OCI-LY7 (cell line): ENCODE measurements at regions of chr6 and their contacts with region 1.

Region 1: GRCh38 chr6:85593438-85594196 is at the start of gene SNX14:
- DNase-seq: peak; percentile 93
- H3K4me3 ChIP-seq: peak within 1 kb of the TSS; percentile 85
- H3K27ac ChIP-seq: peak within 1 kb of the TSS; percentile 83
- H3K4me1 ChIP-seq: peaks cover 26% of the 10 kb centered on the region
- CTCF ChIP-seq: no peak
- total RNA-seq, gene SNX14: 73.4 and 86.0 TPM in 2 replicates

Region 2: DNA sequence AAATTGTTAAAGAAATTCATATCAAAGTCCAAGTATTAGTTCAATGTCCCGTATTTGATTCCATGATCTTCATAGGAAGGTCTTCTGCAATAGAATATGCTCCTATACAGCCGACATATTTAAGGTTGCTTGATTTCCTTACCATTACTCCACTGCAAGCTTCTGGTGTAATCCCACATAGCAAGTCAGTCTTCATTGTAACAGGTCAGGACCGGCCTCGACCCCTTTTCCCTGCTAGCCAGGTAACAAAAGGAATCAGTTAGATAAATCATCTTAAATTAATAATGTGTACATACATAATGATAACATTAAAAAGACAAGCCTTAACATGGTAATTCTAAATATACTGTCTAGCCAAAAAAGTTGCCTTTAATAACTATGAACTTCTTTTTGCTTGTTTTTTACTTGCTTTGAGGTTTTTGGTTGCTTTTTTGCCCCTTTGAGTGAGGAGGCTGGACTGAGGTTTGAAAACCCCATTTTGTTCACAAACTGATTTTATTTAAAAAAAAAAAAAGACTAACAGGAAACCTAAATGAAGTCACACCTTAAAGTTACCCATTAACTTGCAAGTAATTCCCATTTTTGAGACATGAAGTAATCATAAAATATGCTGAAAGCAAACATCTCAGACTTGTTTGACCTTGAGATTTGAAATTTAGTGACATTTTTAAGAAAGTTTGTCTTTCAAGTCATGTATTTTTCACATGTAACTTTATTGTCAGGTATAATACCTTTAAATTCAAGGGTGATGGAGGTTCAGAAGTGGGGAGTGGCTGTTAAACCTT is 19.3 kb after region 1 on chr6:
- CTCF ChIA-PET with region 1: no interaction called
- POLR2A ChIA-PET with region 1: interaction called, 10 read pairs
- intact Hi-C with region 1: no loop called
- DNase-seq: no peak
- H3K4me3 ChIP-seq: no peak overlapping the region
- H3K27ac ChIP-seq: no peak overlapping the region
- H3K4me1 ChIP-seq: no peaks in the 10 kb centered on the region
- CTCF ChIP-seq: no peak

Region 3: DNA sequence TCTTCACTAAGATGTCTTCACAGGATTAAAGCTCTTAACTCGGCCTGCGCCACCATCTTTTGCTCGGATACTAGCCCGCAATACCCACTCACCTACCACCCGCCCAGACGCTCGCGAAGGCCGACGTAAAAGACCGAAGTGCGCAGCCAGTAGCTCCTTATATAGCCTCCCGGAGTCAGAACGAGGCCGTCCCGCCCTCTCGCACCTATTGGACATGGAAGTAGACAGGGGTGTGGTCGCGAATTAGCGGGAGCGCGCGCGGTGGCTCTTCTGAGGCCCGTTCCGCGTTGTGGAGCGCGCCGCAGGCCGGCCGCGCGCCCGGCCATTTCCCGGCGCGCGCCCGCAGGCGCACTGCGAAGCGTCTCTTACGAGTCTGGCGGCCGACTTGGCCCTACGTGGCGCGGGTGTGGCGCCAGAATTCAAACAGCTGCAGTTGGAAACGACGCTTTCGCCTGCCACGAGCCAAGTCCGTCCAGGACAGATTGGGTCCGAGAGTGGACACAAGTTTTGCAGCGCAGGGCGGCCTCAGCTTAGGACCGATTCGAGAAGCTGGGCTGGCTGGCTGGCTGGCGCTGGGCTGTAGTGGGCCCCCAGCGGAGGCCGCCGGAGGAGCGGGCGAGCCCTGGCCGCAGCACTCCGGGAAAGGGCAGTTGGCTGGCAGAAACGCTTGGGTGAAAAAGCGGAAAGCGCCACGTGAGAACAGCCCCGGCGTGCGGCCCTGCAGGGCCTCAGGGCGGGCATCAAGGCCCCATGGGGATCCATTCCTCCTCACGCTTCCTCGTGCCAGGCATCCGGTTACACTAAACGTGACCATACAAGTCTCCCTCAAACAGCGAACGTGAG is 85.2 kb after region 1 on chr6:
- CTCF ChIA-PET with region 1: no interaction called
- POLR2A ChIA-PET with region 1: interaction called, 50 read pairs
- intact Hi-C with region 1: loop called (anchors 1 kb)
- DNase-seq: peak; percentile 99
- H3K4me3 ChIP-seq: peak overlapping the region; percentile 97
- H3K27ac ChIP-seq: peak overlapping the region; percentile 96
- H3K4me1 ChIP-seq: peaks cover 27% of the 10 kb centered on the region
- CTCF ChIP-seq: 0 out of 2 replicates have a peak, but pooled peaks have one; percentile 27